CD4-positive, alpha-beta memory T cell (primary cell): ENCODE measurements at regions of chr9 and their contacts with region 1.

Region 1: DNA sequence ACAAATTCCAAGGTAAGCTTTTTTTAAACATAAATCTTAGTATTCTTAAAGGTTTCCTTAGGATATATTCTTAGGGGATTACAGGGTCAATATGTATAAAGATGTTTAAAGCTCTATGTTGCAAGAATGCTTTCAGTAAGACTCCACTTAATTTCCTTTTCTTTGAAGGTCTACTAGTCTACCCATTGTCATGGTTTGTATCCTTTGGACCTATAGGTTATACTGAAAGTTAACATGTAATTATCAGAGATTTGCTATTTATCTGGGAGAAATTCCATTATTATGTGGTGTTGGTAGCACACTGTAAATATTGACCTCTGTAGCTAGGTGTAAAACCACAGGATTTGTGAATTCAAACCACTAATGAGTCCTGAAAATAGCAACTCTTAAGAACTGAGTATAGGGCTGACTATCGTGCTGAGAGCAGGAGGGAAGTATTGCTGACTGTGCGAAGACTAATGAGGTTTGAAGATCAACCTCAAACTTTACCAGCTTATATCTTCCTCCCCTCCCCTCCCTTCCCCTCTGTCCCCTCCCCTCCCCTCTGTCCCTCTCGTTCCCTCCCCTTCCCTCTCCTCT is 85.6 kb downstream of the GADD45G start:
- DNase-seq: peak in 2 of 5 donors; percentile 13 to 26
- H3K4me3 ChIP-seq: no peak overlapping the region
- H3K4me3 Mint-ChIP-seq: peak overlapping the region in 4 of 8 donors; percentile 21 to 36 (median 29)
- H3K27ac ChIP-seq: no peak overlapping the region
- H3K27ac Mint-ChIP-seq: peak overlapping the region; percentile 9 to 91 (median 62)
- H3K4me1 ChIP-seq: peaks cover 30% of the 10 kb centered on the region
- H3K4me1 Mint-ChIP-seq: peaks cover 13 to 22% (median 19%) of the 10 kb centered on the region in 4 donors
- H3K27me3 ChIP-seq: no peaks in the 10 kb centered on the region
- H3K27me3 Mint-ChIP-seq: no peaks in the 10 kb centered on the region

Region 2: GRCh38 chr9:89375191-89375760 is 315.1 kb before region 1 on chr9:
- CTCF ChIA-PET with region 1: no interaction called
- POLR2A ChIA-PET with region 1: no interaction called
- intact Hi-C with region 1: no loop called
- DNase-seq: peak in 2 of 5 donors; percentile 31 to 41
- H3K4me3 ChIP-seq: no peak overlapping the region
- H3K4me3 Mint-ChIP-seq: peak overlapping the region in 1 of 8 donors; percentile 29
- H3K27ac ChIP-seq: peak overlapping the region; percentile 27
- H3K27ac Mint-ChIP-seq: peak overlapping the region; percentile 73 to 92 (median 82)
- H3K4me1 ChIP-seq: peaks cover 25% of the 10 kb centered on the region
- H3K4me1 Mint-ChIP-seq: peaks cover 21 to 48% (median 37%) of the 10 kb centered on the region in 4 donors
- H3K27me3 ChIP-seq: no peaks in the 10 kb centered on the region
- H3K27me3 Mint-ChIP-seq: no peaks in the 10 kb centered on the region

Region 3: GRCh38 chr9:89701221-89701798 is 10.9 kb after region 1 on chr9:
- CTCF ChIA-PET with region 1: no interaction called
- POLR2A ChIA-PET with region 1: interaction called, 10 read pairs
- intact Hi-C with region 1: no loop called
- DNase-seq: peak; percentile 50 to 91 (median 56)
- H3K4me3 ChIP-seq: peak overlapping the region in 1 of 2 donors; percentile 12
- H3K4me3 Mint-ChIP-seq: peak overlapping the region; percentile 55 to 83 (median 68)
- H3K27ac ChIP-seq: peak overlapping the region; percentile 51
- H3K27ac Mint-ChIP-seq: peak overlapping the region; percentile 16 to 91 (median 83)
- H3K4me1 ChIP-seq: peaks cover 20% of the 10 kb centered on the region
- H3K4me1 Mint-ChIP-seq: peaks cover 15 to 35% (median 19%) of the 10 kb centered on the region in 4 donors
- H3K27me3 ChIP-seq: no peaks in the 10 kb centered on the region
- H3K27me3 Mint-ChIP-seq: no peaks in the 10 kb centered on the region